Activated naive CD4-positive, alpha-beta T cell treated with anti-CD3 and anti-CD28 coated beads, Interleukin-2, amount 10 ng/mL, durations not matched to agents 7 days and 5 days (primary cell): ENCODE measurements at regions of chr3 and their contacts with region 1.

Region 1: DNA sequence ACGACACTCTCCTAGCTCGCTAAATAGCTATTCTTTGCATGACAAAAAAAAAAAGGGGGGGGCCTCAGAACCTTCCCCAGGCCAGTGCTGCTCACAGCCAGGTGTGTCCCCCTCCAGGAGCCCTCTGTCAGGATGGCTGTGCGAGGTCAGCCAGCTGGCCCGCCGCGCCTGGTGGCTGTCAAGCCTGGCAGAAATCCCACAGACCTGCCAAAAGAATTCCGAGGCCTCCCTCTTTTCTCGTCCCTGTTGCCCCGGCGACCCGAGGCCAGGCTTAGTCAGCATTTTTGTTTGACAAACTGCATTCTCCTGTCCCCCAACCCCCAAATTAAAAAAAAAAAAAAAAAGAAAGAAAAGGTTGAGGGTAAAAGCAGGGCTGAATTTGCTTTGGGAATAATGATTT is 61.9 kb downstream of the TM4SF4 start:
- DNase-seq: no peak
- H3K4me3 Mint-ChIP-seq: no peak overlapping the region
- H3K27ac Mint-ChIP-seq: no peak overlapping the region
- H3K4me1 Mint-ChIP-seq: peaks cover 4% of the 10 kb centered on the region
- H3K27me3 Mint-ChIP-seq: peaks cover 18% of the 10 kb centered on the region

Region 2: GRCh38 chr3:149407898-149408297 is 128.5 kb before region 1 on chr3:
- CTCF ChIA-PET with region 1: no interaction called
- DNase-seq: no peak
- H3K4me3 Mint-ChIP-seq: no peak overlapping the region
- H3K27ac Mint-ChIP-seq: no peak overlapping the region
- H3K4me1 Mint-ChIP-seq: no peaks in the 10 kb centered on the region
- H3K27me3 Mint-ChIP-seq: peaks cover 9% of the 10 kb centered on the region

Region 3: GRCh38 chr3:149717391-149718056 is 181.1 kb after region 1 on chr3:
- CTCF ChIA-PET with region 1: interaction called, 25 read pairs
- DNase-seq: peak; percentile 45
- H3K4me3 Mint-ChIP-seq: no peak overlapping the region
- H3K27ac Mint-ChIP-seq: no peak overlapping the region
- H3K4me1 Mint-ChIP-seq: no peaks in the 10 kb centered on the region
- H3K27me3 Mint-ChIP-seq: peaks cover 4% of the 10 kb centered on the region

Region 4: DNA sequence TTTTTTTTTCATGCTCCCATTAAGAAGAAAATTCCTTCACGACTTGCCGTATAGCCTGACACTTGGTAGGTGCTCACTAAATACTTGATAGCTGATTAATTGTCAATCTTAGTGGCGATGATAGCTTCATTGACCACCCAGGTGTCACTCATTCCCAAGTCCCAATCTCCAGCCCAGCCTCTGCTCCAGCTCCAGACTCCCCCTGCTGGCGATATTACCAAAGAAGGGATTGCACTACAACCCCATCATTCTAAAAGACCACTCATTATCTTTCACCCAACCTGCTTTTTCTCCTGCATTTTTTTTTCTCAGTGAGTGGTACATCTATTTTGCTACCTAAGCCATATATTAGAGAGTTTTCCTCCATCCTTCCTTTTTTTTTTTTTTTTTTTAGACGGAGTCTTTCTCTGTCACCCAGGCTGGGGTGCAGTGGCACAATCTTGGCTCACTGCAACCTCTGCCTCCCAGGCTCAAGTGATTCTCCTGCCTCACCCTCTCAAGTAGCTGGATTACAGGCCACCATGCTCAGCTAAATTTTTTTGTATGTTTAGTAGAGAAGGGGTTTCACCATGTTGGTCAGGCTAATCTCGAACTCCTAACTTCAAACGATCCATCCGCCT is 235.3 kb after region 1 on chr3:
- CTCF ChIA-PET with region 1: interaction called, 30 read pairs
- DNase-seq: peak; percentile 36
- H3K4me3 Mint-ChIP-seq: no peak overlapping the region
- H3K27ac Mint-ChIP-seq: no peak overlapping the region
- H3K4me1 Mint-ChIP-seq: no peaks in the 10 kb centered on the region
- H3K27me3 Mint-ChIP-seq: peaks cover 13% of the 10 kb centered on the region

Region 5: DNA sequence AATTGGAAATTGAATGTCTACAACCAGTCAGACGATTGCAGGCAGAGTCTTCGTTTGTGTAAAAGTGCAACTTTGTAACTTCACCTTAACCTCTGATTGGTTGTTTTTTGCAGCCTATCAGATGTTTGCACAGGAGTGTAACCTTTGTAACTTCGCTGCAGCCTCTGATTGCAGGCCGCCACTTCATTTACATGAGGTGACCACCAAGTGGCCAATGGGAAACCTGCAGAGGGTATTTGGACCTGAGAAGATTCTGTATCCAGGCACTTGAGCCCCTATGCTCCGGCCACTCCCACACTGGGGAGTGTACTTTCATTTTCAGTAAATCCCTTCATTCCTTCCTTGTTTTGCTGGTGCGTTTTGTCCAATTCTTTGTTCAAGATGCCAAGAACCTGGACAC is 502.4 kb after region 1 on chr3:
- CTCF ChIA-PET with region 1: no interaction called
- DNase-seq: no peak
- H3K4me3 Mint-ChIP-seq: no peak overlapping the region
- H3K27ac Mint-ChIP-seq: no peak overlapping the region
- H3K4me1 Mint-ChIP-seq: no peaks in the 10 kb centered on the region
- H3K27me3 Mint-ChIP-seq: peaks cover 4% of the 10 kb centered on the region